ENCODE measurements at regions of chr4 and their contacts with region 1.

Region 1: DNA sequence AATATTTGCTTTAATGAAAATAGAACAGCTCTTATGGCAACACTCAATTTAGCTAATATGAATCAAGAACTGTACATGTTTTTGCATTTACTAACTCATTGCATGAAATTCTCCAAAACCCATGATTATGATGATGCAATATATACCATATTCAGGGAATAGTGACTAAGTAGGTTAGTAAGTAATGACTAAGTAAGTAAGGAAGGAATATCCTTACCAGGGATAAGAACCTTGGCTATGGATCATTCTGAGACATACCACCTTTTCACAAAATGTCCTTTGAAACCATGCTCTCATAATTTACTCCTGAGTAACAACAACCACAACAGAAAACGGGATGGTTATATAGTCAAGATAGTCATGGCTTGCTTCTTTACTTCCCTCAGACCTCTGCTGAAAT is 1513.0 kb downstream of the STIM2 start:
- DNase-seq: peak; percentile 81
- H3K4me3 ChIP-seq: peak overlapping the region in 1 of 3 experiments; percentile 0
- H3K27ac ChIP-seq: peak overlapping the region; percentile 73
- H3K4me1 ChIP-seq: peaks cover 27% of the 10 kb centered on the region
- H3K27me3 ChIP-seq: no peaks in the 10 kb centered on the region
- CTCF ChIP-seq: no peak

Region 2: GRCh38 chr4:28287837-28288236 is 85.8 kb before region 1 on chr4:
- CTCF ChIA-PET with region 1: no interaction called
- dilution Hi-C with region 1: no loop called
- in situ Hi-C with region 1: no loop called
- intact Hi-C with region 1: loop called (anchors 5 kb)
- DNase-seq: peak; percentile 97
- H3K4me3 ChIP-seq: no peak overlapping the region
- H3K27ac ChIP-seq: peak overlapping the region; percentile 69
- H3K4me1 ChIP-seq: peaks cover 15% of the 10 kb centered on the region
- H3K27me3 ChIP-seq: no peaks in the 10 kb centered on the region
- CTCF ChIP-seq: no peak

Region 3: DNA sequence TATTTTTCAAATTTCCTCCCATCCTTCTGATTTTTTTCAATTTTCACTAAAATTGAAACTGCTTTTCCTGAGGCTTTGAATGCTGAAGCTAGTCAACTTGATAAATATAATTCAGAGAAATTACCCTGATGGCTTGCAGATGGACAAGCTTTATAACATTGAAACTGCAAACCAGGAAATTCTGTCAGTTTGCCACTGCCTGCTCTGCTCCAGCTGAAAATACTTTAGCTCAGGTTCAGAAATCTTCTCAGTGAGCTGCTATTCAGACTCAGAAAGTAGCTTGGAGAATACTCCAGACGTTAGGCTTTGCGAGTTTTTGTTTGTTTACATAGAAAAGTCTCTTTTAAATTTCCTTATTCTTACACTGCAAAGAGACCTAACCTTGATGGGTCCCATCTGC is 61.7 kb after region 1 on chr4:
- CTCF ChIA-PET with region 1: no interaction called
- dilution Hi-C with region 1: no loop called
- in situ Hi-C with region 1: no loop called
- intact Hi-C with region 1: loop called (anchors 5 kb)
- DNase-seq: no peak
- H3K4me3 ChIP-seq: no peak overlapping the region
- H3K27ac ChIP-seq: peak overlapping the region; percentile 74
- H3K4me1 ChIP-seq: peaks cover 26% of the 10 kb centered on the region
- H3K27me3 ChIP-seq: no peaks in the 10 kb centered on the region
- CTCF ChIP-seq: no peak